A549 (cell line): ENCODE measurements at regions of chr4 and their contacts with region 1.

Region 1: DNA sequence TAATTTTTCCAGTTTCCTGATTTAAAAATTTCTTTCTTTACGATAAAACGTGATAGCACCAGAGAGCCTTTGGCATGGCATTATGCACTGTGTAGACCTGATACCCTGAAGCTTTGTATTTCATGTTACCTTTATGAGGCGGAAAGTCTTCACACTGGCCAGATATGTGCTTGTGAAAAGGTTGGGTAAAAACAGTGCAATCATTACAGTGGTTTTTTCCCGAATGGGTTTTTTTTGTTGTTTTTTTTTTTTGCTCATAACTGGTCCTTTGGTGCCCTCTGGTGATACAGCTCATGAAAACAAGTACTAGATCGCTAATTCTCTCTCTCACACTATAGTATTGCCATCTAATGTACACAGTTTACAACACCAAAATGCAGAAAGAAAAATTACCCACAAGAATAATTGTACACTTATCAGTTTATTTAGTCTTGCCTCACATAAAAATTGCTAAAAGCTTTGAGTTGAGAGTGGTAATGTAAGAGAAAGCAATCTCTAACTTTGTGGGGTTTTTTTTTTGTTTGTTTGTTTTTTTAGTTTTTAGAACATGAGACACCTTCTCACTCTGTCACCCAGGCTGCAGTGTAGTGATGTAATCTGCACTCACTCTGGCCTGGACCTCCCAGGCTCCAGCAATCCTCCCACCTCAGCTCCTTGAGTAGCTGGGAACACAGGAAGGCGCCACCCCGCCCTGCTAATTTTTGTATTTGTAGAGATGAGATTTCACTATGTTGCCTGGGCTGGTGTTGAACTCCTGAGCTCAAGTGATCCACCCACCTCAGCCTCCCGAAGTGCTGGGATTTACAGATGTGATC is 21.3 kb downstream of the SPCS3 start:
- DNase-seq: peak in 1 of 2 experiments; percentile 38
- ATAC-seq: peak; percentile 50 to 69; a peak in 4 of 6 replicates
- H3K4me3 ChIP-seq: no peak overlapping the region
- H3K27ac ChIP-seq: no peak overlapping the region
- H3K4me1 ChIP-seq: no peaks in the 10 kb centered on the region
- CTCF ChIP-seq: peak; percentile 65
- EP300 ChIP-seq: no peak
- POLR2A ChIP-seq: no peak
- RAD21 ChIP-seq: peak; percentile 76

Region 2: DNA sequence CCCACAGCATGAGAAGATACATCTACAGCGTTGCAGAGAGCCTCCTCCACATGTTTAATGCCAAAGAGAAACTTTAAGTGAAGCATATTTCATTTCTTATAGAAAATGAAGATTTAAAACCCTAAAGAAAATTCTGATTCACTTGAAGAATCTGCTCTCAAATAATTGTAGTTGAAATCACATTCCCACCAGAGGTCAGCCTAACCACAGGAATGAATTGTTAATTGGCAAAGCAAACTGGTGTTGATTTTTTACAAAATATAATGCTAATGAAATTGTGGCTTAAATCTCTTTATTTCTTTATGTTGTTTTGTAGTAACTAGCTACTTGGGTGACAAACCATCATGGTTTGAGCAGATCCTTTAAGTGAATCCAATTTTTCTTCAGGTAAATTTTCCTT is 306.6 kb before region 1 on chr4:
- CTCF ChIA-PET with region 1: interaction called, 31 read pairs
- POLR2A ChIA-PET with region 1: no interaction called
- DNase-seq: peak in 1 of 2 experiments; percentile 27
- ATAC-seq: no peak
- H3K4me3 ChIP-seq: no peak overlapping the region
- H3K27ac ChIP-seq: no peak overlapping the region
- H3K4me1 ChIP-seq: no peaks in the 10 kb centered on the region
- CTCF ChIP-seq: peak; percentile 56
- EP300 ChIP-seq: no peak
- POLR2A ChIP-seq: no peak
- RAD21 ChIP-seq: peak; percentile 64 to 76

Region 3: DNA sequence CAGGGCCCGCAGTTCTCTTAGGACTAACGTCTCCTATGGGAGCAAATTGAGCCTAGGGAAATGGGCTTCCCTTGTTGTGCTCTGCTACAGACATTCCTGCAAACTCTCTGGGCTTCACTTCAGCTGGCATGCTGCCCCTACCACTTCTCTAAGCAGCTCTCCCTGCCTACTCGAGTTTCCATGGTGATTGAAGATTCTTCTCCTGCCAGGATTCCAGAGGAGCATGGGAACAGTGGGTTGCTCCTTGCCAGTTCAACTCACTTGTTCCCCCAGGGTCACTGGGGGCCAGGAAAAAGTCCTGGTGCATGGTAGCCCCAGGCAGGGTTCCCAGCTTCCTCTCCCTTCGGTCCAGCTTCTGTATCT is 296.5 kb before region 1 on chr4:
- CTCF ChIA-PET with region 1: interaction called, 10 read pairs
- POLR2A ChIA-PET with region 1: no interaction called
- DNase-seq: no peak
- ATAC-seq: no peak
- H3K4me3 ChIP-seq: no peak overlapping the region
- H3K27ac ChIP-seq: no peak overlapping the region
- H3K4me1 ChIP-seq: no peaks in the 10 kb centered on the region
- CTCF ChIP-seq: no peak
- EP300 ChIP-seq: no peak
- POLR2A ChIP-seq: no peak
- RAD21 ChIP-seq: no peak

Region 4: GRCh38 chr4:176150356-176150682 is 190.8 kb before region 1 on chr4:
- CTCF ChIA-PET with region 1: interaction called, 13 read pairs
- POLR2A ChIA-PET with region 1: no interaction called
- DNase-seq: peak in 1 of 2 experiments; percentile 18
- ATAC-seq: 0 out of 6 replicates have a peak, but pooled peaks of 1 of the 2 experiments have one; percentile 39
- H3K4me3 ChIP-seq: no peak overlapping the region
- H3K27ac ChIP-seq: no peak overlapping the region
- H3K4me1 ChIP-seq: no peaks in the 10 kb centered on the region
- CTCF ChIP-seq: peak; percentile 38; the same call in 2 of the 3 replicates
- EP300 ChIP-seq: no peak
- POLR2A ChIP-seq: no peak
- RAD21 ChIP-seq: peak; percentile 63 to 67

Region 5: GRCh38 chr4:176277162-176277904 is 63.7 kb before region 1 on chr4:
- CTCF ChIA-PET with region 1: interaction called, 10 read pairs
- POLR2A ChIA-PET with region 1: no interaction called
- DNase-seq: peak; percentile 55 to 56
- ATAC-seq: peak; percentile 93 to 97
- H3K4me3 ChIP-seq: no peak overlapping the region
- H3K27ac ChIP-seq: peak overlapping the region; percentile 29 to 34; a peak in 3 of 6 replicates
- H3K4me1 ChIP-seq: peaks cover 14% of the 10 kb centered on the region; the same call in 2 of the 3 replicates
- CTCF ChIP-seq: peak; percentile 45
- EP300 ChIP-seq: no peak
- POLR2A ChIP-seq: no peak
- RAD21 ChIP-seq: peak; percentile 52 to 54